ENCODE measurements at regions of chr1 and their contacts with region 1.

Region 1: DNA sequence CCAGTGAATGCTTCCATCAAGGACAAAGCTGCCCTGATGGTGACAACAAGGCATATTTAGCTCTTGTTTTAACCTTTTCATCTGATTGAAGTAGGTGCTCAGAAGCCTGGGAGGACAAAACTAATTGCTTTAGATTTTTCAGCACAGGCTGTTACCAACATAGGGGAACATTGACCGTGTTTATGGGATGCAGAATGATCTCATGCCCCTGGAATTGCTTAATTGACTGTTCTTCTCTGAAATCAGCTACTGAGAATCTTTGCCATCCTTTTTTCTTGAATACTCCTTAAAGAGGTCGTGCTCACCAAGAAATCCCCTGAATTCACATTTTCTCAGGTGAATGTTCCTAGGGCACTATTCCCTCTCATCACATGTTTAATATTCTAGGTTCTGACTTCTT is 95.9 kb upstream of the CCDC190 start:
- DNase-seq: no peak
- H3K4me3 ChIP-seq: no peak overlapping the region
- CTCF ChIP-seq: no peak

Region 2: GRCh38 chr1:162899422-162900146 is 57.3 kb before region 1 on chr1:
- in situ Hi-C with region 1: loop called (anchors 5 kb)
- DNase-seq: peak; percentile 94
- H3K4me3 ChIP-seq: no peak overlapping the region
- CTCF ChIP-seq: no peak